ENCODE measurements at regions of chr1 and their contacts with region 1.

Region 1: GRCh38 chr1:112105557-112105956 is 116.1 kb upstream of the KCND3 start:
- DNase-seq: no peak
- H3K4me3 ChIP-seq: no peak overlapping the region
- H3K27ac ChIP-seq: no peak overlapping the region
- H3K4me1 ChIP-seq: no peaks in the 10 kb centered on the region
- H3K27me3 ChIP-seq: no peaks in the 10 kb centered on the region
- CTCF ChIP-seq: no peak
- POLR2A ChIP-seq: no peak

Region 2: DNA sequence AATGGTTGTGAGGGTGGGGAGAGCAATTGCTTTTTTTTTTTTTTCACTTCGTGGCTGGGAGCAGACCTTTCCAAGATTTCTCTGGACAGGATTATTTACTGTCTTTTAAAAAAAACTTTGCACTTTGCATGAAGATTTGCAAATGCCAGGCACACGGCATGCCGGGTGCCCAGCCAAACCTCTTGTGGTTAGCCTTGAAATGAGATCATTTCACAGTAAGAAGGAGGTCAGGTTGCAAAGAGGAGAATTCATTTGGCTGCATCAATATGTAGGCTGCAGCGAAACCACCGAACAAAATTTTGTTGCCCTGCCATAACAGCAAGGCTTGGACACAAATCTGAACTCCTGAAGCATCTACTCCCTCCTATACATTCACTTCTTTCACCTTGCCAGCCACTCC is 79.5 kb before region 1 on chr1:
- intact Hi-C with region 1: no loop called
- DNase-seq: no peak
- H3K4me3 ChIP-seq: no peak overlapping the region
- H3K27ac ChIP-seq: no peak overlapping the region
- H3K4me1 ChIP-seq: peaks cover 0 to 6% of the 10 kb centered on the region in 2 donors
- H3K27me3 ChIP-seq: no peaks in the 10 kb centered on the region
- CTCF ChIP-seq: no peak
- POLR2A ChIP-seq: no peak

Region 3: GRCh38 chr1:112169517-112169916 is 64.0 kb after region 1 on chr1:
- intact Hi-C with region 1: loop called (anchors 5 kb)
- DNase-seq: no peak
- H3K4me3 ChIP-seq: no peak overlapping the region
- H3K27ac ChIP-seq: no peak overlapping the region
- H3K4me1 ChIP-seq: no peaks in the 10 kb centered on the region
- H3K27me3 ChIP-seq: no peaks in the 10 kb centered on the region
- CTCF ChIP-seq: no peak
- POLR2A ChIP-seq: no peak